Activated CD4-positive, alpha-beta memory T cell treated with anti-CD3 and anti-CD28 coated beads, Interleukin-2, amount 10 ng/mL, durations not matched to agents 7 days and 5 days (primary cell): ENCODE measurements at regions of chr4 and their contacts with region 1.

Region 1: DNA sequence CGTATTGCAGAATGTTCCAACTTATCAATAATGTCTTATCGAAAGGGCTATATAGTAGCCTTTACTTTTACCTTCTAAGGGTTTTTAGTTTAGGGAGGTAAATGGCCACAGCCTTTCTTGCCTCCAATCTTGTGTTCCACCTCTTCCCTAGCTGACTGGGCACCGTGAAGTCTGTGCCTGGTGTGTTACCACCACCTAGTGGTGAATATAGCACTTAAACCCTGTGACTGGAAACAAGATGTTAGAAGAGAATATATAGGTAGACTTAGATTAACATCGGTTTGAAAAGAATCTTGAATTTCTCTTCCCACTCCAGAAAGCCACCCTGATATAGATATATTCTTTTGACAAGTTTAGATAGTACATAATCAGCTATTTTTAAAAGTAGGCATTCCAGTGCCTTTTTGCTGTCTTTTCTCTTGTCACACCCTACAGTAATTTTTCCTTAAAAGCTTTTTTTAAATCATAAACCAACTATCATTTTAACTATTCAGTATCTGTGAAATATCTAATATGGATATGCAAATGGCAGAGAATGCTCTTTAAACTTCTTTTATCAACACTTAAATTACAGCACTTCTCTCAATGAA is 27.8 kb upstream of the ADH7 start:
- DNase-seq: peak; percentile 49
- H3K4me3 Mint-ChIP-seq: no peak overlapping the region
- H3K27ac Mint-ChIP-seq: no peak overlapping the region
- H3K4me1 Mint-ChIP-seq: no peaks in the 10 kb centered on the region
- H3K27me3 Mint-ChIP-seq: peaks cover 26% of the 10 kb centered on the region

Region 2: GRCh38 chr4:99117876-99118693 is 344.9 kb before region 1 on chr4:
- CTCF ChIA-PET with region 1: interaction called, 15 read pairs
- POLR2A ChIA-PET with region 1: no interaction called
- DNase-seq: no peak
- H3K4me3 Mint-ChIP-seq: no peak overlapping the region
- H3K27ac Mint-ChIP-seq: no peak overlapping the region
- H3K4me1 Mint-ChIP-seq: no peaks in the 10 kb centered on the region
- H3K27me3 Mint-ChIP-seq: peaks cover 2% of the 10 kb centered on the region

Region 3: DNA sequence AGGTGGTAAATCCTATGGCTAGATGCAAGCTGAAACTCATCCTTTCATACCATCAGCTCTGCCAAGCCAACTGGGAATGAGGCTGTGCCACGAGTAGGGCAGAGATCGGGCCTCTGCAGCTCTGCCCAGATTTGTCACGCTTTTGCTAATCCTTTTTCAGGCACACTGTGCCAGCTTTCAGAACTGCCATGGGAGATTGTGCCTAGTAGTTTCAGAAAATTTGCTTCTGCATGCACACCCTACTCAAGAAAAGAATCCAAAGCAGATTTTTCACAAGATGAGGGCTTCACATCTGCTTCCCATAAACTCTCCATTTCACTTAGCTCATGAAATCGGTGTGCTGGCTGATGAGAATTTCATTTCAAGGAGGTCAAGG is 24.6 kb before region 1 on chr4:
- CTCF ChIA-PET with region 1: no interaction called
- POLR2A ChIA-PET with region 1: no interaction called
- DNase-seq: no peak
- H3K4me3 Mint-ChIP-seq: no peak overlapping the region
- H3K27ac Mint-ChIP-seq: no peak overlapping the region
- H3K4me1 Mint-ChIP-seq: no peaks in the 10 kb centered on the region
- H3K27me3 Mint-ChIP-seq: peaks cover 10% of the 10 kb centered on the region

Region 4: GRCh38 chr4:99473131-99473530 is 10.2 kb after region 1 on chr4:
- CTCF ChIA-PET with region 1: interaction called, 14 read pairs
- POLR2A ChIA-PET with region 1: no interaction called
- DNase-seq: no peak
- H3K4me3 Mint-ChIP-seq: no peak overlapping the region
- H3K27ac Mint-ChIP-seq: no peak overlapping the region
- H3K4me1 Mint-ChIP-seq: no peaks in the 10 kb centered on the region
- H3K27me3 Mint-ChIP-seq: peaks cover 7% of the 10 kb centered on the region